PC-3 (cell line): ENCODE measurements at regions of chr9 and their contacts with region 1.

Region 1: DNA sequence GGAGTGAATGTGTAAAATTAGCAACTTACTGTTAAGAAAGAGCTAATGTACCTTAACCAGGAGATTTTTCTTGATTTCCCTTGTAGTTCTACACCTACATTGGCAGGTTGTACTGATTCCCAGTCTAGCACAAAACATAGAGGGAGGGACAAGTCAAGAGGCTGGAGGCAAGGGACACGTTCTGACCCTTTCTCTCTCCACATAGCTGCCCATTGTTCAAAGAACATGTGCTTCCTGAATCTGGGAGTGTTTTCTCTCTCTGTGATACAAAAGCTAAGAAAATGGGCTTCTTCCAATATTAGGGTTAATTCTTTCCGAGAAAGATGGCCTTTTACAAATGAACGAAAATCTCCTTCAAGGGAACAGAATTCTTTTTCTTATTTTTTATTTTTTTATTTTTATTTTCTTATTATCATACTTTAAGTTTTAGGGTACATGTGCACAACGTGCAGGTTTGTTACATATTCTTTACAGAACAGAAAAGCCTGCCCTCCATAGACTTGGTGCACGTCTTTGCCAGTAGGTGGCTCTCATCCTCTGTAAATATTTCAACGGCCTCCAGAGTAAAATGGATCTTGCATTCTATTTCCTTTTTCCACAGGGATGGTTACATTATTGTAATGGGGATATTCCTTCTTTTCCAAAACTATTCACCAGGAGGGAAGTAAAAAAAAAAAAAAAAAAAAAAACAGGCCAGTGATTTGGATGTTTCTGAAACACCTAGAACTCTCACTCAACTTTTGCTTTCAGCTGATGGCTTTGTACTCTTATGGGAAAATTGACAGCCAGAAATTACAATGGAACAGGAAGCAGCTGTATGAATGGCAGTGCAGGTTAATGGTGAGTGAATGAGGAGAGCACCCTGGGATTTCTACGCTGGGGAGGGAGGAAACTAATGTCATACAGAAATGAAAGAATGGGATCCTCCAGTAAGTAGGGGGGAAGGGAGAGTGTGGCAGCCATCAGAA is 13.1 kb upstream of the IFNA5 start:
- DNase-seq: peak; percentile 64
- ATAC-seq: peak; percentile 76
- H3K4me3 ChIP-seq: no peak overlapping the region
- H3K27ac ChIP-seq: no peak overlapping the region
- H3K4me1 ChIP-seq: no peaks in the 10 kb centered on the region
- H3K27me3 ChIP-seq: no peaks in the 10 kb centered on the region
- CTCF ChIP-seq: peak; percentile 62

Region 2: DNA sequence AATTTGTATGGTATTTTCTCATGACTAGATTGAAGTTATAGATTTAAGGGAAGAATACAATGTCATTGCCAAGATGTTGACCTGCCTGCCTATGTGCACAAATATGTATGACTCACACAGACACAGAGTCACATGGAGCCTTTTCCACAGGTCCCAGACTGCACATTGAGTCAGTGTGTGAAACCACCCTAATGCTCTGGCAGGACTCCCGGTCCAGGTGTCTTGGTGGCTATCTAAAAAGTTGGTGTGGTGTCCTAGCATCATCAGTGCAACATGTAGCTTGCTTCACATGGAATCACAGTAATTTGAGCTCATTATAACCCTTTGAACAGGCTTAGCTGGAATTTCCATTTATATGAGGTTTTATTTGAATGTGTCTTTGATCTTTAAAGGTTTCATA is 23.9 kb before region 1 on chr9:
- CTCF ChIA-PET with region 1: no interaction called
- POLR2A ChIA-PET with region 1: no interaction called
- intact Hi-C with region 1: no loop called
- DNase-seq: peak; percentile 83
- ATAC-seq: peak; percentile 95
- H3K4me3 ChIP-seq: no peak overlapping the region
- H3K27ac ChIP-seq: peak overlapping the region; percentile 3; the same call in 1 of the 2 replicates
- H3K4me1 ChIP-seq: peaks cover 16% of the 10 kb centered on the region
- H3K27me3 ChIP-seq: no peaks in the 10 kb centered on the region
- CTCF ChIP-seq: no peak

Region 3: DNA sequence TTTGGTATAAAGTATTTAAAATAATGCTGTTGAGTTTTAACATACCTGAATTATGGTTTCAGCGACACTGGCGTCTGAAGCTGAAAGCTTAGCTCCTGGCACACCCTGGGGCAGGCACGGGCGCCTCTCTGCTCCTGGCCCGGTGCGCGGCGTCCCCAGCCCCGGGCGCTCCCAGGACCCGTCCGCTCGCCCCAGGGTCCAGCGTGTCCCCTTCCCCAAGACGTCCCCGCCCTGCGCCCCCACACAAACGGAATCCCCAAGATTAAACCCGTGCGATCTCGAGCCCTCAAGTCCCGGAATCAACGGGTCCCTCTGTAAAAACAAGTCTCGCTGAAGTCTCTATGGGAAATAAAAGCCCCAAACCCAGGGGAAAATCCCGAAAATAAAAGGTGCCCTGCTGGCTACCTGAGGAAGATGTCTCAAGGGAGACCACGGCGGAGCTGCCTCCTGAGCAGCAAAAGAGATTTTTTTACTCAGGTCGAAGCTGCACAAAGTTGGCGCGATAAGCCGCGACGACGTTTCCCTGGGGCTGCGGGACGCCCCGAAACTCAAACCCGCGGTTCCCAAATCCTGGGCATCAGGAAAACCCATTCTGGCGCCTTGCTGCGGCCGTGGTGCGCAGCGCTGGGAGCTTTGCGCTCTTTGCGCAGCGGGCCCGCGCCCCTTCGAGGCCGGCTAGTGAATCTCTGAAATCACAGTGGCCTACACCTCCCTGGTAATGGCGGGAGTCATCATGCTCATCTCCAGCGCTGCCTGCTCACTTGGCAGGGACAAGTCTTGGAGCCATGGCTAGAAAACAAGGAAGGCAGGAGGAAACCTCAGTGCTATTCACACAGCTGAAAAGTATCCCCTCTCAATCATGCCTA is 84.4 kb after region 1 on chr9:
- CTCF ChIA-PET with region 1: no interaction called
- POLR2A ChIA-PET with region 1: no interaction called
- intact Hi-C with region 1: no loop called
- DNase-seq: no peak
- ATAC-seq: no peak
- H3K4me3 ChIP-seq: no peak overlapping the region
- H3K27ac ChIP-seq: no peak overlapping the region
- H3K4me1 ChIP-seq: no peaks in the 10 kb centered on the region
- H3K27me3 ChIP-seq: no peaks in the 10 kb centered on the region
- CTCF ChIP-seq: no peak

Region 4: GRCh38 chr9:21455320-21455719 is 137.1 kb after region 1 on chr9:
- CTCF ChIA-PET with region 1: no interaction called
- POLR2A ChIA-PET with region 1: no interaction called
- intact Hi-C with region 1: loop called (anchors 2 kb)
- DNase-seq: peak; percentile 54
- ATAC-seq: peak; percentile 77
- H3K4me3 ChIP-seq: no peak overlapping the region
- H3K27ac ChIP-seq: no peak overlapping the region
- H3K4me1 ChIP-seq: peaks cover 17% of the 10 kb centered on the region
- H3K27me3 ChIP-seq: no peaks in the 10 kb centered on the region
- CTCF ChIP-seq: peak; percentile 83